Left lung (tissue), 14 donors: ENCODE measurements at regions of chr14 and their contacts with region 1.

Region 1: GRCh38 chr14:91177073-91178034 is 63.5 kb downstream of the DGLUCY start:
- DNase-seq: peak in 2 of 4 donors; percentile 56 to 61
- ATAC-seq: peak; percentile 91
- H3K4me3 ChIP-seq: no peak overlapping the region
- H3K27ac ChIP-seq: peak overlapping the region in 1 of 2 donors; percentile 41
- H3K4me1 ChIP-seq: peaks cover 4 to 10% of the 10 kb centered on the region in 2 donors
- H3K27me3 ChIP-seq: no peaks in the 10 kb centered on the region
- CTCF ChIP-seq: peak; percentile 72 to 74

Region 2: DNA sequence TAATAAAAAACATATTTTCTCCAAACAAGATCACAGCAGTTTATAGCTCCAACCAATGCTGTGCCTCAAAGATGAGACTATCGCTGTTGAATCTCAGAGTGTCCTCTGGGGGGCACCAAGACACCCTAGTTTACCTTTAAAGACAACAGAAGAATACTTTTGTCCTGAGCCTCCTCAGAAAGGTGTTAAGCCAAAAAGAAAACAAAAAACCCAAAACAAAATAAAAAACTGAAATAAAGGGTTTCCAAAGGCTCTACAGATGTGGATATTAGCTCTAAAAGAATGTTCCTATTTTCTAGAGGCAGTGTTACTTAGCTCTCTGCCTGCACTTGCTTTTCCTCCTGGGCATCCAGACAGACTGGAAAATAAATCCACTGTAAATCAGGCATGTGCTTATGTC is 274.3 kb before region 1 on chr14:
- intact Hi-C with region 1: loop called in 1 of 2 experiments (anchors 5 kb)
- DNase-seq: peak in 2 of 4 donors; percentile 38 to 70
- ATAC-seq: peak; percentile 97
- H3K4me3 ChIP-seq: no peak overlapping the region
- H3K27ac ChIP-seq: no peak overlapping the region
- H3K4me1 ChIP-seq: no peaks in the 10 kb centered on the region
- H3K27me3 ChIP-seq: no peaks in the 10 kb centered on the region
- CTCF ChIP-seq: peak; percentile 69 to 72

Region 3: DNA sequence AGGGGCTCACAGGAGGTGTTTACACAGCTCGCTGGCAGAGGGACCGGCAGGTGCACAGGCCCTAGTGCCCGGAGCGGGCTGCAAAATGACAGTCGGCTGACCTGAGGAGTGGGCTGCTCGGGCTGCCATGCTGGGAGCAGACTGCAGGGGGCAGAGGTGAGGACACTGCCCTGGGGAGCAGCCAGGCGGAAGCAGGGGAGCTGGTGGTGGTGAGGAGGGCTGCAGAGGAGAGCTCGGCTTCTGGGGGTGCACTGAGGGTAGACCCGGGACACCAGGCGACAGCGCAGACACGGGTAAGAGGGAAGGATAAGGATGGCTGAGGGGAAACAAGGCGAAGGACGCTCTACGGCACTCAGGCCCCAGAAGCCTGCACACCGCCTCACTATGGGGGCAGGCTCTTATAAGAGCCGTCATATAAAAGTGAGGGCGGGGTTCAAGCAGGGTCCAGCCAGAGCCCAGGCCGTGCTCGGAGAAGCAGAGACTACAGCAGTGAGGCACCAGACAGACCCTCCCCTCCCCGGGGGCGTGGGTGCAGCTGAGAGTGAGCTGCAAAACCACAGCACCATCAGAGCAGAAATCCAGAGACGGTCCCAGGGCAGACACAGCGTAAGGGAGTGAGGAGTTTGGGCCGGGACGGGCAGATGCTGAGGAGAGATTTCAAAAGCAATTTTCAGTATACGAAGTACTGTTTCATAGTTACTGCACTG is 177.8 kb after region 1 on chr14:
- intact Hi-C with region 1: no loop called
- DNase-seq: no peak
- ATAC-seq: no peak
- H3K4me3 ChIP-seq: no peak overlapping the region
- H3K27ac ChIP-seq: no peak overlapping the region
- H3K4me1 ChIP-seq: peaks cover 12 to 43% of the 10 kb centered on the region in 2 donors
- H3K27me3 ChIP-seq: no peaks in the 10 kb centered on the region
- CTCF ChIP-seq: no peak